ENCODE measurements at regions of chr1 and their contacts with region 1.

Region 1: DNA sequence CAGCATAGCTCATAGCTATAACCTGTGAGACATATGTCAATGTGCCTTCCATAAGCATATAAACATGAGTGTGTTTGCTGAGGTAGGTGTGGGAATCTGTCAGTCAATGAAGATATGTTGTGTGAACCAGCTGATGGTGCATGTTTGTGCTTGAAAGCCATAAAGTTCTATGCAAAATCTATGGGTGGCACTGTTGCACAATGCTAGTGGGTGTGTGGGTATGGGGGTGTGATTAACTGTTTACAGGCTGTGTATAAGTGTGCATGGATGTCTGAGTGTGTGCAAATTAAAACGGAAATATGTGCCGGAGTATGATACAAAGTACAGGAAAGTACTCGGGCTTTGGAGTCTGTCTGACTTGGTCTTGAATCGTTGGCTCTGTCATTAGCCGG is 1.0 kb upstream of the ATP2B4 start:
- DNase-seq: peak; percentile 96
- H3K4me3 Mint-ChIP-seq: peak overlapping the region; percentile 75
- H3K27ac Mint-ChIP-seq: peak overlapping the region; percentile 91
- H3K4me1 Mint-ChIP-seq: peaks cover 53% of the 10 kb centered on the region
- H3K27me3 Mint-ChIP-seq: no peaks in the 10 kb centered on the region
- CTCF ChIP-seq: peak; percentile 28

Region 2: DNA sequence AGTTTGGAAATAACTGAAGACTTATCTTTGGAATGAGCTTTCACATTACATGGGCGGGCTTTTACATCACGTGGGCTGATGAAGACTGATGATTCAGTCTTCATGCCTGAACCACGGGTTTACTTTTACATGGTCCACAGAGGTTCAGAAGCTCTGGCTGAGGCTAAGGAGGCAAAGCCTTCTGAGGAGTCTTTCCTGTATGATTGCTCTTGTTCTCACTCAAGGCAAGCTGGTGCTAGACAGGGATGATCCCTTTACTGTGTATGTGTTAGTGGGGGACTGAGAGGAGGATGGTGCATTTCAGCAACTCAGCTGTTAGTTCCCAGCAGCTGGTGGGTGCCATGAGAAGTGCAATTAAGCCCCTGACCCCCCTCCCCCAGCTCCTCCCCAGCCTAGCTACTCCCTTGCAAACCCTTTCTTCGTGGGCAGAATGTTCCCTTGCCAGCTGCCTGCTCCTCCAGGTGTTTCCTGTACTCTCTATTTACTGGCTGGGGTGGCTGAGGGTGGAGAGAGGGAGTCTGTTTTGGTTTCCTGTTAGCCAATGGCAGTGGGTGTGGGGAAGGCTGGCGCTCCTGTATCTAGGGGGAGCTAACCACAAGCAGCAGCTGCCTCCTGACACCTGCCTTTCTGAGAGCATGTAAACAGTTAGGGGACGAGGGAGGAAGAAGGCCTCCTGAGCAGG is 304.9 kb before region 1 on chr1:
- CTCF ChIA-PET with region 1: no interaction called
- POLR2A ChIA-PET with region 1: no interaction called
- intact Hi-C with region 1: no loop called
- DNase-seq: peak; percentile 51
- H3K4me3 Mint-ChIP-seq: no peak overlapping the region
- H3K27ac Mint-ChIP-seq: no peak overlapping the region
- H3K4me1 Mint-ChIP-seq: peaks cover 20% of the 10 kb centered on the region
- H3K27me3 Mint-ChIP-seq: peaks cover 49% of the 10 kb centered on the region
- CTCF ChIP-seq: no peak

Region 3: GRCh38 chr1:203526572-203526971 is 99.1 kb before region 1 on chr1:
- CTCF ChIA-PET with region 1: interaction called, 3 read pairs
- POLR2A ChIA-PET with region 1: interaction called, 20 read pairs
- intact Hi-C with region 1: no loop called
- DNase-seq: peak; percentile 60
- H3K4me3 Mint-ChIP-seq: no peak overlapping the region
- H3K27ac Mint-ChIP-seq: no peak overlapping the region
- H3K4me1 Mint-ChIP-seq: peaks cover 19% of the 10 kb centered on the region
- H3K27me3 Mint-ChIP-seq: no peaks in the 10 kb centered on the region
- CTCF ChIP-seq: no peak

Region 4: GRCh38 chr1:203607533-203607873 is 18.1 kb before region 1 on chr1:
- CTCF ChIA-PET with region 1: interaction called, 24 read pairs
- POLR2A ChIA-PET with region 1: interaction called, 23 read pairs
- intact Hi-C with region 1: no loop called
- DNase-seq: no peak
- H3K4me3 Mint-ChIP-seq: no peak overlapping the region
- H3K27ac Mint-ChIP-seq: no peak overlapping the region
- H3K4me1 Mint-ChIP-seq: peaks cover 15% of the 10 kb centered on the region
- H3K27me3 Mint-ChIP-seq: no peaks in the 10 kb centered on the region
- CTCF ChIP-seq: no peak

Region 5: GRCh38 chr1:203663294-203663693 is 37.7 kb after region 1 on chr1:
- CTCF ChIA-PET with region 1: interaction called, 4 read pairs
- POLR2A ChIA-PET with region 1: interaction called, 8 read pairs
- intact Hi-C with region 1: loop called (anchors 1 kb)
- DNase-seq: peak; percentile 98
- H3K4me3 Mint-ChIP-seq: peak overlapping the region; percentile 3
- H3K27ac Mint-ChIP-seq: peak overlapping the region; percentile 58
- H3K4me1 Mint-ChIP-seq: peaks cover 34% of the 10 kb centered on the region
- H3K27me3 Mint-ChIP-seq: no peaks in the 10 kb centered on the region
- CTCF ChIP-seq: no peak

Region 6: DNA sequence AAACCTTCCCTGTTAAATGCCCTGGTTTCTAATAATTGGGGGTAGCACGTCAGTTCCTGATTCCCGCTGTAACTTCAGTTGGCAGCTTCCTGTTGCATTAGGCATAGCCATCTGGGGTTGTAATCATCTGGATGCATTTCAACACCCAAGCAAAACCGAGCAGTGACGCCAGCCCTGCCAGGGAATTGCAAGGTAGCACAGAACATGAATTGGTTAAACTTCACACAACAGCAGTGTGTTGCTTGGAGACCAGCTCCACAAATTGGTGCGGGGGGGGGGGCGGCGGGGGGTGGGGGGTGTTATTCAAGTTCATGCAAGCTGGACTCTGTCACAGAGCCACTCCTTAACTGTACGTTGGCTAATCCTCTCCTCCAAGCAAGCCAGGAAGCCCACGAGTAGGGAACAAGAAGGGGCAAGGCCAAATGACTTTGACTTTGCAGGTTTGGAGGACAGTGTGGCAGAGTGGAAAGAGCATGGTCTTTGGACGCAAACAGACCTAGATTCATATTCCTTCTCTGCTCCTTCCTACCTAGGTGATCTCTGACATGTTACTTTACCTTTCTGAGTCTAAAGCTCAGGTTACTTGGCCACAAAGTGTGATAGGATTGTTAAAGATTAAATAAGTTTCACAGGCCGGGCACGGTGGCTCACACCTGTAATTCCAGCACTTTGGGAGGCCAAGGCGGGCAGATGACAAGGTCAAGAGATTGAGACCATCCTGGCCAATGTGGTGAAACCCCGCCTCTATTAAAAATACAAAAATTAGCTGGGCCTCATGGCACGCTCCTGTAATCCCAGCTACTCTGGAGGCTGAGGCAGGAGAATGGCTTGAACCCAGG is 144.1 kb after region 1 on chr1:
- CTCF ChIA-PET with region 1: interaction called, 4 read pairs
- POLR2A ChIA-PET with region 1: interaction called, 16 read pairs
- intact Hi-C with region 1: no loop called
- DNase-seq: peak; percentile 99
- H3K4me3 Mint-ChIP-seq: peak overlapping the region; percentile 63
- H3K27ac Mint-ChIP-seq: peak overlapping the region; percentile 88
- H3K4me1 Mint-ChIP-seq: peaks cover 32% of the 10 kb centered on the region
- H3K27me3 Mint-ChIP-seq: no peaks in the 10 kb centered on the region
- CTCF ChIP-seq: no peak

Measured in MCF 10A (cell line).